ENCODE measurements at regions of chr17 and their contacts with region 1.

Region 1: DNA sequence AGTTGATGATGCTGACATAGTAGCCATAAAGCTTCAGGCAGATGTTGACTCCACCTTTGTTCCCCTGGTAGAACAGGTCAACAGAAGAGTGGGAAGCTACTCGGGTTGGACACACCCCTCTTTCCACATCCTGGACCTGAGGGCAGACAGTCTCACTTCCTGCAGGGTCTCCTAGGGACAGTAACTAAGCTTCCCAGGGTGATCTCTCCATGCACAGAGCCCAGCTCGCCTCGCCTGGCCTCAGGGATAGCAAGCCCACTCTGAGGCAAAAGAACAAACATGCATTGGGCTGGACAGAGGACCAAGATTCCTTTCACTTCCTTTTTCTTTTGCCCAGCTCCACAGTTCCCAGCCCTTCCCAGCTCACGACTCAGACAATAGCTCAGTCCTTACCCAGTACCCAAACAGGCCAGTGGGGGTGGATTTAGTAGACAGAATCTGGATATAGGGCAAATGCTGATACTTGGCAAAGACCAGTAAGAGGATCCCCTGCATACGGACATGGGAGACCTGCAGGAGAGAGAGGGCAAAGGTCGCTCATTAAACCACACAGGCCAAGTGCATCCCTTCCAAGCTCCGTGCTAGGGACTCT is 7.0 kb downstream of the INPP5K start:
- DNase-seq: peak; percentile 49 to 64
- H3K4me3 ChIP-seq: no peak overlapping the region
- H3K4me3 Mint-ChIP-seq: no peak overlapping the region
- H3K27ac Mint-ChIP-seq: peak overlapping the region; percentile 7
- H3K4me1 ChIP-seq: no peaks in the 10 kb centered on the region
- H3K4me1 Mint-ChIP-seq: peaks cover 16% of the 10 kb centered on the region
- H3K27me3 ChIP-seq: no peaks in the 10 kb centered on the region
- H3K27me3 Mint-ChIP-seq: no peaks in the 10 kb centered on the region
- CTCF ChIP-seq: no peak

Region 2: DNA sequence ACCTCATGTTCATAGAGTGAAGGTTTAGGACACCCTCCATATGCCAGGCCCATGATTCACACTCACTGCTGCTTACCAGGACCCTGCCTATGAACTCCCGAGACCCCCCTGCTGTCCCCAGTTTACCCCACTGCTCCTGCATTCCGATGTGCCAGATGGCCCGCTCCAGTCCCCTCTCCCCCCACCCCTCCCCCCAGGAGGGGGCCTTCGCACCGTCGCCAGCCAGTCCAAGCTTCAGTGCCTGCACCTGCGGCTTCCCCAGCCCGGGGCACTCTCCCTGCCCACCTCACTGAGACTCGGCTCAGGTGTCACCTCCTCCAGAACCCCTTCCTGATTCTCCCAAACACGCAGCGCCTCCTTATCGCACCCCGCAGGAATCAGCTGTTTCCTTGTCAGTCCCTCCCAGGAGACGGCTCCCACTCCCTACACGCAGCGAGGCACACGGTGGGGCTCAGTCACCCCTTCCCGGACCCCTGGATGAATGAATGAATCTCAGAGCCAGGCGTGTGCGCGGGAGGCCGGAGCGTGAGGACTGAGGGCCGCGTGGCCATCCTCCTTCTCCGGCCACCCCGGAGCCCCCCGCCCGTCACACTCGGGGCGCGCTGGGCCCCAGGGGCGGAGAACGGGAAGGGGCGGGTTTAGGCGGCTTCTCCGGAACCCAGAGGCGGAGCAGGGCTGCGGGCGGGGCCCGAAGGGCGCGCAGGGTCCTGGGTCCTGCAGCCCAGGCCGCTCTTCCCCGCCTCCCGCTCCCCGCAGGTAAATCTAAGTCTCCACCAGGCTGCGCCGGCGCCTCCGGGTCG is 18.5 kb before region 1 on chr17:
- CTCF ChIA-PET with region 1: no interaction called
- POLR2A ChIA-PET with region 1: no interaction called
- intact Hi-C with region 1: loop called (anchors 2 kb)
- DNase-seq: peak; percentile 82 to 84
- H3K4me3 ChIP-seq: peak overlapping the region; percentile 59
- H3K4me3 Mint-ChIP-seq: peak overlapping the region; percentile 91
- H3K27ac Mint-ChIP-seq: peak overlapping the region; percentile 70
- H3K4me1 ChIP-seq: peaks cover 25% of the 10 kb centered on the region
- H3K4me1 Mint-ChIP-seq: peaks cover 8% of the 10 kb centered on the region
- H3K27me3 ChIP-seq: no peaks in the 10 kb centered on the region
- H3K27me3 Mint-ChIP-seq: no peaks in the 10 kb centered on the region
- CTCF ChIP-seq: no peak

Measured in Caco-2 (cell line).